PC-9 (cell line): ENCODE measurements at regions of chr2 and their contacts with region 1.

Region 1: DNA sequence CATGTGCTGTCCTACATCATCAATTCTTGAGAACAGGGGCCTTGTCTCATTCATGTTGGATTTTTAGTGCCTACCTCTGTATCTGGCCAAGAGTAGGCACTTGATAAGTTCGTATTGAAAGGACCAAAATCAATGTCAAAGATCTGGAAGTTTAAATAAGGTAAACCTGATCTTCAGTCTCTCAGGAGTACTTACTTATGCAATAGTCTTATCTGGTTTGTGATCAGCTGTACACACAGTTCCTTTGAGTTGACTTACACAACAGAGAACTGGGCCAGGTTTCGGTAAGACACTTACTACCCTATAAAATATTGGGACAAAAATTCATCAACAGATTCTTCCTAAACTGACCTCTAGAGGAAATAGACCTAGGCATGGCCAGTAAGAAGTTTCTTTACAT is 113.5 kb upstream of the NXPH2 start:
- DNase-seq: no peak
- H3K4me3 ChIP-seq: no peak overlapping the region
- H3K27ac ChIP-seq: no peak overlapping the region
- H3K4me1 ChIP-seq: no peaks in the 10 kb centered on the region
- H3K27me3 ChIP-seq: no peaks in the 10 kb centered on the region
- CTCF ChIP-seq: no peak

Region 2: DNA sequence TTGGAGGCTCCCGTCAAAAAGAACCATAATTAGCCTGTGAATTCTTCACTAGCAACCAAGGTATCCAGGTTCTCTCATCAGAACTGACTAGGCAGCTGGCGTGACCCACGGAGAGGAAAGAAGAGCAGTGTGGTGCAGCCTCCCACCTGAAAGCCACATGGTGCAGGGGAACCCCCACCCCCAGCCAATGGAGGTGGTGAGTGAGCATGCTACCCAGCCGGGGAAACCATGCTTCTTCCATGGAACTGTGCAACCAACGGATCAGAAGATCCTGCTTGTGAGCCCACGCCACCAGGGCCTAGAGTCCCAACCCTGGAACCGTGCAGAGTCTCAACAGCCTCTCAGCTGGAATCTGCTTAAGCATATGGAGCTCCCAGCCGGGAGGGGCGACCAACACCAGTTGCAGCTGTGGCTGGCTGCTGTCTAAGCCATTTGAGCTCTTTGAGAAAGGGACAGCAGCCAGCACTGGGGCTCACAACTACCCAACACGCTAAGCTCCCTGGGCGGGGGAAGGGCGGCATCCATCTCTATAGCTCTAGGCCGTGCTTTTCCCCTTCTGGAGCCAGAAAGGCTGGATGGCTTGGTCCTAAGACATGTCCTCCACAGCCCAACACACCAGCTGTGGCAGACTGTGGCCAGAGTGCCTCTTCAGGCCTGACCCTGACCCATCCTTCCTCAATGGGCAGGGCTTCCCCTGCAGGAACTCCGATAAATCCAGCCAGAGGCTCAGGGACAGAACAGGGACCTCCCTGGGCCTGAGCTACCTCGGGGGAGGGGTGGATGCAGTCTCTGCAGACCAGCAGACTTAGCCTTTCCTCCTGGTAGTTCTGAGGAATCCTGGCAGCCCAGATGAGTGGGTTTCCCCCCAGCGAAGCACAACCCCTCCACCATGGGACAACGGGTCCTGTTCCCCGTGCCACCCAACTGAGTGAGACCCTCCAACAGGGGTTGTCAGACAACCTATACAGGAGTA is 37.9 kb after region 1 on chr2:
- CTCF ChIA-PET with region 1: no interaction called
- POLR2A ChIA-PET with region 1: no interaction called
- intact Hi-C with region 1: no loop called
- DNase-seq: no peak
- H3K4me3 ChIP-seq: no peak overlapping the region
- H3K27ac ChIP-seq: no peak overlapping the region
- H3K4me1 ChIP-seq: no peaks in the 10 kb centered on the region
- H3K27me3 ChIP-seq: no peaks in the 10 kb centered on the region
- CTCF ChIP-seq: no peak

Region 3: DNA sequence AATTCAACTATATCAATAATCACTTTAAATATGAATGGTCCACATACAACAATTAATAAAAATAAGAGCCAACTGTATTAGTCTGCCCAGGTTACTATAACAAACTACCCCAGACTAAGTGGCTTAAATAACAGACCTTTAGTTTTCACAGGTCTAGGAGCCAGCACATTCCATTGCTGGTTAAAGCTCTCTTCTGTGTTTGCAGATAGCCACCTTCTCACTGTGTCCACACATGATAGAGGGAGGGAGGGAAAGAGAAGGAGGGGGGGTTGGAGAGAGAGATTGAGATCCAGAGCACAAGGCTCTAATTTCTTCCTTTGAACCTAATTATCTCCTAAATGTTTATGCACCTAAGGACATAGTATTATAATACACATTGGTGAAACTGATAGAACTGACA is 154.3 kb after region 1 on chr2:
- CTCF ChIA-PET with region 1: no interaction called
- POLR2A ChIA-PET with region 1: interaction called, 10 read pairs
- intact Hi-C with region 1: no loop called
- DNase-seq: no peak
- H3K4me3 ChIP-seq: no peak overlapping the region
- H3K27ac ChIP-seq: no peak overlapping the region
- H3K4me1 ChIP-seq: no peaks in the 10 kb centered on the region
- H3K27me3 ChIP-seq: no peaks in the 10 kb centered on the region
- CTCF ChIP-seq: no peak